ENCODE measurements at regions of chr3 and their contacts with region 1.

Region 1: GRCh38 chr3:42118762-42119361 is 27.7 kb downstream of the TRAK1 start:
- DNase-seq: peak; percentile 42
- H3K4me3 ChIP-seq: no peak overlapping the region
- H3K27ac ChIP-seq: peak overlapping the region in 1 of 4 donors; percentile 8
- H3K4me1 ChIP-seq: peaks cover 7 to 48% (median 9%) of the 10 kb centered on the region in 4 donors
- H3K27me3 ChIP-seq: no peaks in the 10 kb centered on the region
- CTCF ChIP-seq: peak in 4 of 5 experiments; percentile 11 to 52 (median 33)
- EP300 ChIP-seq: no peak
- POLR2A ChIP-seq: no peak

Region 2: DNA sequence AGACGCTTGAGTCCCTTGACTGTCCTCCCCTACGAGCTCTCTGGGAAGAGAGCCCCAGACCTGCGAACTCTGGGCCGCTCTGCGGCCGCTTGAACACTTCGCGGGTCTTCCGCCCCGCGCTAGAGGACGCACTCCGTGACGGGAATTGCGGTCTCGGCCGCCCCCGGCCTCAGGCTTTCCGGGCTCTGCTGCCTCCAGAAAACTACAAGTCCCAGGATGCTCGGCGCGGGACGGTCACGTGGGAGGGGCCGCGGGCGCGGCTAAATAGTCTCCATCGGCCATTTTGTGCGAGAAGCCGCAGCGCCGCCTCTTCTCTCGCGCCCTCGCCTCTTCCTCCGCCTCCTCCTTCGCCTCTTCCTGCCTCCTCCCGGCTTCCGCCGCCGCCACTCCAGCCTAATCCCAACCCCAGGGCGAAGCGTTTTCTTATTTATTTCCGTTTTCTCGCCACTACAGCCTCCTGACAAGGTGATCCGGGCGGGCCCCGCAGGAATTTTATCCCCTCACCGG is 1809.4 kb before region 1 on chr3 and contains the start of gene EIF1B:
- in situ Hi-C with region 1: no loop called
- intact Hi-C with region 1: loop called (anchors 5 kb)
- DNase-seq: peak; percentile 99
- H3K4me3 ChIP-seq: peak within 1 kb of the TSS; percentile 81 to 100 (median 96)
- H3K27ac ChIP-seq: peak within 1 kb of the TSS; percentile 96 to 100 (median 98)
- H3K4me1 ChIP-seq: peaks cover 0 to 47% (median 16%) of the 10 kb centered on the region in 4 donors
- H3K27me3 ChIP-seq: no peaks in the 10 kb centered on the region
- CTCF ChIP-seq: peak; percentile 76 to 94 (median 88)
- EP300 ChIP-seq: no peak
- POLR2A ChIP-seq: peak; percentile 93
- total RNA-seq, gene EIF1B: 5.2 to 90.2 (median 25.2) TPM

Region 3: DNA sequence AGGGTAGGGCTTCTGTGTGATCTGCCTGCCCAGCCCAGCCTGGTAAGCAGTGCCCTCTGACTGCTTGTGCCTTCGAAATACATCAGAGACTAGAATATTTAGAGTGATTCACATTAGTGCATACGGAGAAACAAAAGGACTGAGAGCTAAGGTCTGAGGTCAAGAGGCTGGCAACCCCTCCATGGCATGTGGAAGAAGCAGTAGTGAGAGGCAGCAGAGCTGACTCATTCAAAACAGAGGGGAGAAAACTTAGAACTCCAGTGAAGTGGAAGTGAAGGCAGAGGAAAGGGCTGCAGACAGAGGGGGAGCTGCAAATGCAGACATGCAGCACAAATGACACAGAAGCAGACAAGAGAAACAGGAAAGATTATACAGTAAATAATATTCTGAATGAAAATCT is 218.6 kb before region 1 on chr3:
- in situ Hi-C with region 1: loop called in 1 of 4 experiments (anchors 25 kb)
- intact Hi-C with region 1: no loop called
- DNase-seq: no peak
- H3K4me3 ChIP-seq: no peak overlapping the region
- H3K27ac ChIP-seq: no peak overlapping the region
- H3K4me1 ChIP-seq: no peaks in the 10 kb centered on the region
- H3K27me3 ChIP-seq: no peaks in the 10 kb centered on the region
- CTCF ChIP-seq: no peak
- EP300 ChIP-seq: no peak
- POLR2A ChIP-seq: no peak

Region 4: GRCh38 chr3:42184651-42185443 is 66.0 kb after region 1 on chr3:
- in situ Hi-C with region 1: loop called in 3 of 4 experiments (anchors 5 to 10 kb)
- intact Hi-C with region 1: loop called (anchors 10 kb)
- DNase-seq: peak; percentile 26
- H3K4me3 ChIP-seq: no peak overlapping the region
- H3K27ac ChIP-seq: peak overlapping the region in 1 of 4 donors; percentile 12
- H3K4me1 ChIP-seq: peaks cover 1 to 20% (median 11%) of the 10 kb centered on the region in 4 donors
- H3K27me3 ChIP-seq: no peaks in the 10 kb centered on the region
- CTCF ChIP-seq: no peak
- EP300 ChIP-seq: no peak
- POLR2A ChIP-seq: no peak

Region 5: DNA sequence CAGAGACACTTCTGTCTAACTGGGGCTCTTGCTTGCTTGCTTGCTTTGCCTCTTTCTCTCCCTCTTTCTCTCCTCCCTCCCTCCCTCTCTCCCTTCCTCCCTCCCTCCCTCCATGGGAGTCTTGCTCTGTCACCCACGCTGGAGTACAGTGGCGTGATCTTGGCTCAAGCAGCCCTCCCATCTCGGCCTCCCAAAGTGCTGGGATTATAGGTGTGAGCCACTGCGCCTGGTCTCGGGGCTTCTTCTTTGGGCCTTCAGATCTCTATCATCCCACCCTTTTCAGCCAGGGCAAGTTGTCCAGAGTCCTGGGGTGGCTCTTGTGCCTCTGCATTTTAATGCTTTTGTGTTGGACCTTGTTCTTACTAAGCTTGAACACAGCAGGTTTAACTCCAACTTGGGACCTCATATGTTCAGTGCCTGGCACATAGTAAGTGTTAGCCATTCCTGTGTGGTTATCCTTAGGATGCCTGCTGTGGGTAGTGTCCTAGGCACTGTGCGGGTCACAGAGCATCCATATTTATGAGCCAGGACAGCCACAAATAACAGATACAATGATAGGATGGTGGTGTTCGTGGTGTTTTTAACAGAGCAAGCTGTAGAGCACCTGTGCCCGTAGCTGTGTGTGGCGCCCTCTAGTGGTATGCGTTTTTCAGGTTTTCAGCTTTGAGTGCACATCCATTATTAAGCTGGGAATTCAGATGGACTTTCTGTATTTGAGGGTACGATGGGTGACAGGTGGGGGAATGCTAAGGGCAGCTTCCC is 72.0 kb after region 1 on chr3:
- in situ Hi-C with region 1: loop called in 3 of 4 experiments (anchors 5 to 10 kb)
- intact Hi-C with region 1: loop called (anchors 10 kb)
- DNase-seq: peak; percentile 78
- H3K4me3 ChIP-seq: no peak overlapping the region
- H3K27ac ChIP-seq: no peak overlapping the region
- H3K4me1 ChIP-seq: peaks cover 0 to 4% (median 0%) of the 10 kb centered on the region in 4 donors
- H3K27me3 ChIP-seq: no peaks in the 10 kb centered on the region
- CTCF ChIP-seq: peak; percentile 80 to 90 (median 85)
- EP300 ChIP-seq: no peak
- POLR2A ChIP-seq: no peak